Activated CD4-positive, alpha-beta memory T cell treated with anti-CD3 and anti-CD28 coated beads for 36 hours (primary cell): ENCODE measurements at regions of chr7 and their contacts with region 1.

Region 1: GRCh38 chr7:76179686-76180085 is 22.0 kb upstream of the SRRM3 start:
- DNase-seq: no peak
- H3K4me3 Mint-ChIP-seq: no peak overlapping the region
- H3K27ac Mint-ChIP-seq: no peak overlapping the region
- H3K4me1 Mint-ChIP-seq: no peaks in the 10 kb centered on the region
- H3K27me3 Mint-ChIP-seq: peaks cover 1% of the 10 kb centered on the region

Region 2: DNA sequence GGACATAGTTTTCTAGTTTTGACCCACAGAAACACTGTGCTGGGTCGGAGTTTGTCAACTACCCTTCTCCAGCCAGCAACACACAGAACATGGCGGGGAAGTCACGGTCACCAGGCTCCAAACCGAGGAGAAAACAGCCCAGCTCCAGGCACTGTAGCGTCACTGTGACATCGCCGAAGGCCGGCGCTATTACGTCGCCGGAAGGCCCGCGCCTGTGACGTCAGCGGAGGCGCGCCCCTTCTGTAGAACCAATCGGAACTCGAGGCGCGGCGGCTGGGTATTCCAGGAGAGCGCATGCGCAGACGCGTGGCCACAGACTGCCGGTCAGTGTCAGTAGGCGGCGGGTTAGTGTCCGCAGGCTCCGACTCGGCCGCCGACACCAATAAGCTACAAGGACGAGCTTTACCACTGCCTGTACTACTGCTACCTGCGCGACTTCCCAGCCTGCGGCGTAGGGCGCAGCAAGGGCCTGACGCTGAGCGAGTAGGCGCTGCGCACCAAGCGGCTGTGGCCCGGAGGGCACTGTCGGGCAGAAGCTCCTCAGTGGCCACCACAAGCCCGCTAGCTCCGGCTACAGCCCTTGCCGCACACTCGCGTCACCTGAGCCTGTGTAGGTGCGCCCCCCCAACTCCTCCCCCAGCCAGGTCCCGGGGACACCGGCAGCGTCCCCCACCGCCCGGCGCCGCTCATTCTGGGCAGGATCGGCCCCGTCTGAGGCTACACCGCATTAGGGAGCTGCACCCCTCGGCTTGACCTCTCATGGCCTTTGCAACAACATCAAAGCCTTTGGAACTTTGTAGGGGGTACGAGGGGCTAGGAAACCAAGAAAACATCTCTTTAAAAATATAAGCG is 13.1 kb before region 1 on chr7:
- CTCF ChIA-PET with region 1: interaction called, 14 read pairs
- POLR2A ChIA-PET with region 1: interaction called, 3 read pairs
- intact Hi-C with region 1: no loop called
- DNase-seq: peak; percentile 95
- H3K4me3 Mint-ChIP-seq: peak overlapping the region; percentile 82
- H3K27ac Mint-ChIP-seq: peak overlapping the region; percentile 73
- H3K4me1 Mint-ChIP-seq: peaks cover 6% of the 10 kb centered on the region
- H3K27me3 Mint-ChIP-seq: no peaks in the 10 kb centered on the region

Region 3: DNA sequence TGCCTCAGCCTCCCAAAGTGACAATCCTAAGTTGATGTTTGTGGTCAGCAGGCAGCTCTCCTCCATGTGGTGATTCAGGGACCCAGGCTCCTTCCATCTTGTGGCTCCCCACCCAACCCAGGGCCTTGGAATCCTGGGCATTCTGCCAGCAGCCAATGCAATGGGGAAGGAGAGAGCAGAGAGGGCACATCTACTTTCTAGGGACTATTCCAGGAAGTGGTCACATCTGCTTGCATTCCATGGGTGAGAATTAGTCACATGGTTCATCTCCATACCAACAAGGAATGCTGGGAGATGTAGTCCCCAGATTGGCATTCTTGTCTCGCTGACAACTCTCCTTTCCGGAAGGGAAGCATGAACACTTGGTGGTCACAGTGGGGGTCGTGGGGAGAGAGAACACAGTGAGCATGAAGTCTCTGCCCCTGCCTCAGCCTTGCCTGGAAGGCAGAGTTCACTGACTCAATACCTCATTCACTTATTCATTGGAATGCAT is 12.1 kb after region 1 on chr7:
- CTCF ChIA-PET with region 1: interaction called, 9 read pairs
- POLR2A ChIA-PET with region 1: no interaction called
- intact Hi-C with region 1: loop called (anchors 2 kb)
- DNase-seq: no peak
- H3K4me3 Mint-ChIP-seq: no peak overlapping the region
- H3K27ac Mint-ChIP-seq: no peak overlapping the region
- H3K4me1 Mint-ChIP-seq: no peaks in the 10 kb centered on the region
- H3K27me3 Mint-ChIP-seq: peaks cover 3% of the 10 kb centered on the region

Region 4: DNA sequence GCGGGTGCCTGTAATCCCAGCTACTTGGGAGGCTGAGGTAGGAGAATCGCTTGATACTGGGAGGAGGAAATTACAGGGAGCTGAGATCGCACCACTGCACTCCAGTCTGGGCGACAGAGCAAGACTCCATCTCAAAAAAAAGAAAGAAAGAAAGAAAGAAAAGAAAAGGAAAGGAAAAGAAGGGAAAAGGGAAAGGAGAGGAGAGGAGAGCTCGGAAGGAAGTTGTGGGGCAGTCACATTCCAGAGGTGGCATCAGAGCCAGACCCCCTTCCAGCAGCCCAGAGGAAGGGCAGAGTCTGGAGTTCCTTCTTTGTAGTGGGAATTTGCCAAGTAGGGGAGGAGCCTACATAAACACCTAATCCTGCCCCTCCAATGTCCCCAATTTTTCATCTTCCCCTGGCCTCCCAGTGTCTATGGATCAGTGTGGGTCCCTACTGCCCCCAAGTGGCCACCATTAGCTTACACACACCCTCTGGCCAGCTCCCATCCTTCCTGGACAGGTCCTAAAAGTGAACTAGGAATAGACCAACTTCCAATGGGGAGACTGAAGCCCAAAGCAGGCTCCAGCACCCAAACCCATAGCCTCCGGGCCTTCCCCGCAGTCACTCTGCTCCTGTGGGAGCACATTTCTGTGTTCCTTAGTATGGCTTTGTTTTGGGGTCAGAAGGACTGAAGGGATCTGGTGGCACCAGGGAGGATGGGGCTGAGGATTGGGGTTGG is 83.2 kb after region 1 on chr7:
- CTCF ChIA-PET with region 1: interaction called, 48 read pairs
- POLR2A ChIA-PET with region 1: no interaction called
- intact Hi-C with region 1: loop called (anchors 1 kb)
- DNase-seq: peak; percentile 54
- H3K4me3 Mint-ChIP-seq: no peak overlapping the region
- H3K27ac Mint-ChIP-seq: no peak overlapping the region
- H3K4me1 Mint-ChIP-seq: peaks cover under 1% of the 10 kb centered on the region
- H3K27me3 Mint-ChIP-seq: peaks cover 24% of the 10 kb centered on the region

Region 5: DNA sequence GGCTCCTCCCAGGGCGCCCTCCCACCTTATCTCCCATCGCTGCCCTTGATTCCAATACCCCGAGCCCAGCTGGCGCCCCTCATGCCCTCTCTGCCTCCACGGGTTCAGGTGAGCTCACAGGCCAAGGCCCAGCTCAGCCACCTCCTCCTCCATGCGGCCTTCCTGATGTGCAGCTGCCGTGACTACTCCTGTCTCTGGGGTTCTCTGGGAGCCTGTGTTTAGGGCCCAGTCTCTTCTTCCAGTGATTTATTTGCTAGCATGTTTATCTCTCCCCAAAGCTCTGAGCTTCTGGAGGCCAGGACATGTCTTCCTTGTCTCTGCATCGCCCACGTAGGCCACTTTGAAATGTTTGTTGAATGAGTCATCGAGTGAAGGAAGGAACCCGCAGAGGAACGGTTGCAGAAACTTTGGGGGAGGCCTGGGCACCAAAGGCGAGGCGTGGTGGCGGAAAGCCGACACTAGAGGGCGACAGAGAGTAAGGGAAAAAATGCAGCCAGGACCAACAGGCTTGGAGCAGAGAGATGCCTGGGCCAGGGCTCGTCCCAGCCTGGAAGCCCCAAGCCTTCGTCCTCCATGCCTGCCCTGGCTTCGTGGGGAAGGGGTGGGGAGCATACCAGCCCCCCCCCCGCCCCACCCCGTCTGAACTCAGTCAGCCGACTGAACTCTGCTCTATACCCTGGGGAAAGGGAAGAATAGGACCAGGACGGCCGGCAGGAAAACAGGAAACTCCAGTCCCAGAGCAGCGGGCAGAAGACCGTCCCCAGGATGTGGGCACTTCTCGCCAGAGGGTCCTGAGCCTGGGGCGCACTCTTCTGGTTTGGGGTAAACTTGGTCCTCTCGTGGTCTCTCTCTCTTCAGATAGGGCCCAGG is 111.9 kb after region 1 on chr7:
- CTCF ChIA-PET with region 1: interaction called, 13 read pairs
- POLR2A ChIA-PET with region 1: no interaction called
- intact Hi-C with region 1: loop called (anchors 2 kb)
- DNase-seq: peak; percentile 96
- H3K4me3 Mint-ChIP-seq: peak overlapping the region; percentile 0
- H3K27ac Mint-ChIP-seq: peak overlapping the region; percentile 61
- H3K4me1 Mint-ChIP-seq: peaks cover 10% of the 10 kb centered on the region
- H3K27me3 Mint-ChIP-seq: no peaks in the 10 kb centered on the region